GM10248 (cell line): ENCODE measurements at regions of chr15 and their contacts with region 1.

Region 1: GRCh38 chr15:91110407-91110806 is 10.3 kb downstream of the SV2B start:
- DNase-seq: no peak
- CTCF ChIP-seq: no peak

Region 2: GRCh38 chr15:91075739-91076138 is 34.7 kb before region 1 on chr15:
- CTCF ChIA-PET with region 1: no interaction called
- POLR2A ChIA-PET with region 1: no interaction called
- DNase-seq: no peak
- CTCF ChIP-seq: no peak

Region 3: DNA sequence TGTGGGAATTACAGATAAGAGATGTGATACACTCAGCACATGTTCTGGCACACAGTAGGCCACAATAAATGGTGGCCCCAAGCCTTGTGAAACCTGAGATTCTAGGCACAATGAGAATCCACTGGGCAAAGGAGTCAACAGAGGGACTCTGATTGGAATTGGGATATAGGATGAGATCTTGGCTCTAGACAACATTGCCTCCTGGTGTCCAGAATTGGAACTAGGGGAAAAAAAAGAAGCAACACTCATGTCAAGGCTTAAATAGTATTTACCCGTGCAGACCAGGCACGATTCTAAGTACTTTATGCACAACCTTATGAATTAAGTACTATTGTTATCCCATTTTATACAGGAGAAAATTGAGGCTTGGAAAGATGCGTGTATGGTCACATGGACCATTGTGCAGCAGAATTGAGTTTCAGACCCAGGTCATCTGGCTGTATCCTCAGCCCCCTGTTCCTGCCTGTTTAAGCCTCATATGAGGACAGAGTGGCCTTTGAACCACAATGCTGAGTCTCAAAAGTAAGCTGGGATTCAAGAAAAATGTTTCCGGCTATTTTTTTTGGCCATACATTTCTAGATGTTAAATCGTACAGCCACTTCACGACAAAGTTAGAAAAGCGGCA is 114.5 kb after region 1 on chr15:
- CTCF ChIA-PET with region 1: interaction called, 12 read pairs
- POLR2A ChIA-PET with region 1: no interaction called
- DNase-seq: peak; percentile 54
- CTCF ChIP-seq: peak; percentile 70